Psoas muscle (tissue), 8 donors: ENCODE measurements at regions of chr1 and their contacts with region 1.

Region 1: DNA sequence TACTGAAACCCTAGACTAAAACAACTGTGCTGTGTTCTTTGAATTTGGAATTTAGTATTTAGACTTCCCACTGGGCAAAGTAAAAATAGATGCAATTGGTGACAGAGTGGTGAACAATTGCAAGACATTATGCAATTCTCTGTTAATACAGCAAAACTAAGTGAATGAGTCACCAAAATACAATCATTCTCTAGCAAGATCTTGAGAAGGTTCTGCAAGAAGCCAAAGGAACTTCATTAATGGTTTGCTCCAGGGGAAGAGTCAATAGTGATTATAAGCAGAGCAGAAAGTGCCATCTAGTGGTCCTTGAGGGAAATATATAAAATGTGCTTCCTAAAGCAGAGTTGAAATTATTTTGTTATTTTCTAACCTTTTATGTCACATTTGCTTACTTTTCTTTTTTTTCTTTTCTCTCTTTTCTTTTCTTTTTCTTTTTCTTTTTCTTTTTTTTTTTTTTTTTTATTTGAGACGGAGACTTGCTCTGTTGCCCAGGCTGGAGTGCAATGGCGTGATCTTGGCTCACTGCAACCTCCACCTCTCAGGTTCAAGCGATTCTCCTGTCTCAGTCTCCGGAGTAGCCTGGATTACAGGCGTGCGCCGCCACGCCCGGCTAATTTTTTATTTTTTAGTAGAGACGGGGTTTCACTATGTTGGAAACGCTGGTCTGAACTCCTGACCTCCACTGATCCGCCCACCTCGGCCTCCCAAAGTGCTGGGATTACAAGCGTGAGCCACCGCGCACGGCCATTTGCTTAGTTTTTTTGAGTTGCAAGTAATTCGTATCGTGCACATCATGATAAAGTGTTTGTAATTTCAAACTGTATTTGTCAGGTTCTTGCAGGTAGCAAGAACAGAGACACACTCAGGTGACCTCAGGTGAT is 99.2 kb downstream of the CTH start:
- DNase-seq: no peak
- ATAC-seq: peak; percentile 57 to 84 (median 72)
- H3K4me3 ChIP-seq: no peak overlapping the region
- H3K27ac ChIP-seq: no peak overlapping the region
- H3K4me1 ChIP-seq: no peaks in the 10 kb centered on the region
- H3K27me3 ChIP-seq: no peaks in the 10 kb centered on the region
- CTCF ChIP-seq: peak; percentile 70

Region 2: DNA sequence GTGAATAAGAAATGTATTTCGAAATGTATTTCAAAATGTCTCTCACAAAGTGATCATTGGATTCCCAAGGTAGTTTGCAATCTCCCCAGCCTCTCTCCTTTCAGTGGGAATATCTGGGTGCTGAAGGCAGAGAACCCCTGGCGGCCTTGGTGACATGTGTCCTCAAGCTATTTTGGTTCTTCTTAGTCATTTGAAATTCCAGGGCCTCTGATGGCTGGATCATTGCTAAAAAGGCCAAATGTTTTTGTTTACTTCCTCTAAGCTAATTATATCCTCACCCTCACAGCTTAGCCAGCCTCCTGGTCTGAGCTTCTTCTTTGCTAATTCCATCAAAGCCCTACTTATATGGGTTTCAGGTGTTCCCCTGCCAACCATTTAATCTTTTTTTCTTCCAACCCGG is 376.1 kb before region 1 on chr1:
- intact Hi-C with region 1: loop called (anchors 2 to 10 kb)
- DNase-seq: peak; percentile 25 to 57
- ATAC-seq: peak; percentile 92 to 96 (median 95)
- H3K4me3 ChIP-seq: no peak overlapping the region
- H3K27ac ChIP-seq: peak overlapping the region; percentile 86
- H3K4me1 ChIP-seq: peaks cover 19% of the 10 kb centered on the region
- H3K27me3 ChIP-seq: no peaks in the 10 kb centered on the region
- CTCF ChIP-seq: no peak

Region 3: GRCh38 chr1:70436622-70437251 is 73.5 kb before region 1 on chr1:
- intact Hi-C with region 1: loop called in 1 of 2 experiments (anchors 5 kb)
- DNase-seq: no peak
- ATAC-seq: no peak
- H3K4me3 ChIP-seq: no peak overlapping the region
- H3K27ac ChIP-seq: no peak overlapping the region
- H3K4me1 ChIP-seq: no peaks in the 10 kb centered on the region
- H3K27me3 ChIP-seq: no peaks in the 10 kb centered on the region
- CTCF ChIP-seq: peak; percentile 23

Region 4: GRCh38 chr1:70608815-70609214 is 98.6 kb after region 1 on chr1:
- intact Hi-C with region 1: no loop called
- DNase-seq: no peak
- ATAC-seq: no peak
- H3K4me3 ChIP-seq: no peak overlapping the region
- H3K27ac ChIP-seq: no peak overlapping the region
- H3K4me1 ChIP-seq: no peaks in the 10 kb centered on the region
- H3K27me3 ChIP-seq: no peaks in the 10 kb centered on the region
- CTCF ChIP-seq: no peak

Region 5: GRCh38 chr1:71307451-71307850 is 797.2 kb after region 1 on chr1:
- intact Hi-C with region 1: no loop called
- DNase-seq: no peak
- ATAC-seq: no peak
- H3K4me3 ChIP-seq: no peak overlapping the region
- H3K27ac ChIP-seq: no peak overlapping the region
- H3K4me1 ChIP-seq: no peaks in the 10 kb centered on the region
- H3K27me3 ChIP-seq: no peaks in the 10 kb centered on the region
- CTCF ChIP-seq: no peak